ENCODE measurements at regions of chr12 and their contacts with region 1.

Region 1: GRCh38 chr12:101759396-101760047 is 20.3 kb upstream of the SYCP3 start:
- DNase-seq: no peak
- H3K4me3 ChIP-seq: no peak overlapping the region
- CTCF ChIP-seq: peak; percentile 55

Region 2: DNA sequence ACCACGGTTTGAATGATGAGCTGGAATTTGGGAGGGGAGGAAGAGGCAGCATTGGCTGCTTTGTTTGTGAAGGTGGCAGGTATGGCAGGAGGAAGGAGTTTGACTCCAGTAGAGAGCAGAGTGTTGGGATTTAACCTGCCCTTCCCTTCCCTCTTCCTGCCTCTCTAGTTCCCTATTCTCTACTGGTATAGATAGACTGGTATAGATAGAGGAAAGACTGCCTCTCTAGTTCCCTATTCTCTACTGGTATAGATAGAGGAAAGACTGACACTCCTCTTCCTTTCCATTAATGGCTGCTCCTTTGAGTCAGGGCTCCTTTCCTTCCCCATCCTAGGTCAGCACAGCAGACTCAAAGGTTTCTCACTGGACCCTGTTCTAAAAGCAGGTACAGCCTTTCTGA is 11.8 kb before region 1 on chr12:
- CTCF ChIA-PET with region 1: interaction called, 13 read pairs
- POLR2A ChIA-PET with region 1: no interaction called
- DNase-seq: no peak
- H3K4me3 ChIP-seq: no peak overlapping the region
- CTCF ChIP-seq: no peak

Region 3: DNA sequence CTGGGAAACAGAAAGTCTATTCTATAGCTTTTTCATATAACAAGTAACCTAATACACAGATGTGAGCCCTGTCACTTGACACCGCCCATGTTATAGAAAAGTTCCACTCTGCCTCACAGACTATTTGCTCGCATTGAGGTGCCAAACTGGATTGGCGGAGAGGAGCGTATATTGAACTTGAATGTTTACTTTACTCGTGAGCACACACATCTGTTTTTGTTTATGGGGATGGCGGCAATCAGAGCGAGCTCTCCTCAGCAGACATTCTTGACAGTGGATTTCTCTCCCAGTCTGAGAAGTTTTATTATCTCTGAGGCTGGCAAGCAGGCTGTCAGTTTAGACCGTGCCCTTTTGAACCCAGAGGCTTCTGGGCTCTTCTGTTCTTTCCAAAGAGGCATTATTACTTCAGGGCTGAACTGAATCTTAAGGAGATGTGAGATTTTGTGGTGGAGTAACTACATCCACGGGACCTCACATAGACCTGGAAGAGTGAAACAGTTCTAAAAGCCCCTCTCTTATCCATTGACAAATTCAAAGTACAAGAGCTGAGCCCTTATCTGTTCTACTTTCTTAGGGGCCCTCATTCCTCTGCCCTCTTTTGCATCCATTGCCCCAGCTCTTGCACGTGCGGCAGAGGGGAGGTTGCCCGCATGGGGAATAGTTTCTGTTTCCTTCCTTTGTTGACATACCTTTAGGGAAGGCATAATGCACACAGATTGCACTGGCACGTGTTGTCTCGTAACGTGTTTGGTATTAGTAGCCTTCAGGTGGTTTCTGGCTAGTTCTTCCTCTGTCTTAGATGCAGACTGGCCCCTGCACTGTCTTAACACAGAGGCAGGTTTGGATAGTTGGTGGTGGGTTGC is 186.1 kb after region 1 on chr12:
- CTCF ChIA-PET with region 1: no interaction called
- POLR2A ChIA-PET with region 1: no interaction called
- DNase-seq: no peak
- H3K4me3 ChIP-seq: no peak overlapping the region
- CTCF ChIP-seq: no peak

Measured in AG04449 (cell line).